Heart right ventricle (tissue), 16 donors: ENCODE measurements at regions of chr4 and their contacts with region 1.

Region 1: GRCh38 chr4:64417974-64418373 is 8.7 kb upstream of the TECRL start:
- DNase-seq: peak in 1 of 2 donors; percentile 54
- ATAC-seq: peak; percentile 84 to 98 (median 94)
- H3K4me3 ChIP-seq: peak overlapping the region in 1 of 10 donors; percentile 0
- H3K27ac ChIP-seq: peak overlapping the region; percentile 20 to 82 (median 66)
- H3K4me1 ChIP-seq: peaks cover 0 to 4% (median 0%) of the 10 kb centered on the region in 9 donors
- H3K27me3 ChIP-seq: no peaks in the 10 kb centered on the region
- CTCF ChIP-seq: no peak

Region 2: GRCh38 chr4:64465263-64465662 is 47.3 kb after region 1 on chr4:
- intact Hi-C with region 1: loop called in 1 of 10 experiments (anchors 5 kb)
- DNase-seq: no peak
- ATAC-seq: peak in 3 of 8 donors; percentile 60 to 71 (median 64)
- H3K4me3 ChIP-seq: no peak overlapping the region
- H3K27ac ChIP-seq: no peak overlapping the region
- H3K4me1 ChIP-seq: peaks cover 0 to 6% (median 0%) of the 10 kb centered on the region in 9 donors
- H3K27me3 ChIP-seq: no peaks in the 10 kb centered on the region
- CTCF ChIP-seq: no peak

Region 3: GRCh38 chr4:64489628-64490027 is 71.7 kb after region 1 on chr4:
- intact Hi-C with region 1: loop called in 4 of 10 experiments (anchors 5 to 10 kb)
- DNase-seq: no peak
- ATAC-seq: peak in 2 of 8 donors; percentile 56
- H3K4me3 ChIP-seq: no peak overlapping the region
- H3K27ac ChIP-seq: peak overlapping the region in 4 of 10 donors; percentile 11 to 56 (median 30)
- H3K4me1 ChIP-seq: peaks cover 0 to 5% (median 0%) of the 10 kb centered on the region in 9 donors
- H3K27me3 ChIP-seq: no peaks in the 10 kb centered on the region
- CTCF ChIP-seq: no peak

Region 4: DNA sequence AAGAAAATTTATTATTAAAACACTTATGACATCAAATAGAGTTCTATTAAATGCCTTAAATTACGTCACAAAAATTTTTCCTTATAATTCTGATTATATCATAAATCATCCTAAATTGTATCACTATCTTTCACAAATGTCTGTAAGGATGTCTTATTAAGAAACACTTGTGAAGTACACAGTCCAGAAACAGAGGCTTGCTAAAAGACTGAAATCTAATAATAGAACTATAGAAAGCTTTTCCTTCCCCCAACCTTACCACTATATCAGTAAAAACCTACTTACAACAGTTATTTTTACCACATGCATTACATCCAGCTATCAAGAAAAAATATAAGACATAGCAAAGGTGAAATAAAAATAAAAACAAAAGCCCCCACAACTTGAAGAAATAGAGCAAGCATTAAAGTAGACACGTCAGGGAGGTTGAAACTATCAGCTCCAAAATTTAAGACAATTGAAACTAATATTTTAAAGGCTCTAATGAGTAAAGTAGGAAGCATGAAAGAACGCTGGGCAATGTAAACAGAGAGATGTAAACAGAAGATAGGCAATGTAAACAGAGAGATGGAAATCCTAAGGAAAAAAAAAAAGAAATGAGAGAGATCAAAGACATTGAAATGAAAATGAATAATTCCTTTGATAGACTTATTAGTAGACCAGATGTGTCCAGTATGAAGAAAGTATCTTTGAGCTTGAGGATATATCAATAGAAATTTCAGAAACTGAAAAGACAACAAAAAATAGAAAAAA is 86.1 kb after region 1 on chr4:
- intact Hi-C with region 1: loop called in 1 of 10 experiments (anchors 5 kb)
- DNase-seq: no peak
- ATAC-seq: peak in 2 of 8 donors; percentile 39 to 58
- H3K4me3 ChIP-seq: no peak overlapping the region
- H3K27ac ChIP-seq: peak overlapping the region in 5 of 10 donors; percentile 13 to 45 (median 22)
- H3K4me1 ChIP-seq: peaks cover 0 to 5% (median 0%) of the 10 kb centered on the region in 9 donors
- H3K27me3 ChIP-seq: no peaks in the 10 kb centered on the region
- CTCF ChIP-seq: no peak

Region 5: GRCh38 chr4:64533637-64534036 is 115.7 kb after region 1 on chr4:
- intact Hi-C with region 1: loop called in 4 of 10 experiments (anchors 5 to 10 kb)
- DNase-seq: no peak
- ATAC-seq: peak in 2 of 8 donors; percentile 35 to 51
- H3K4me3 ChIP-seq: no peak overlapping the region
- H3K27ac ChIP-seq: peak overlapping the region in 2 of 10 donors; percentile 4 to 35
- H3K4me1 ChIP-seq: peaks cover 0 to 5% (median 0%) of the 10 kb centered on the region in 9 donors
- H3K27me3 ChIP-seq: no peaks in the 10 kb centered on the region
- CTCF ChIP-seq: no peak